ENCODE measurements at regions of chr5 and their contacts with region 1.

Region 1: GRCh38 chr5:151157426-151158286 is at the start of gene ANXA6:
- DNase-seq: peak; percentile 66
- H3K4me3 Mint-ChIP-seq: peak within 1 kb of the TSS; percentile 94
- H3K27ac Mint-ChIP-seq: peak within 1 kb of the TSS; percentile 92
- H3K4me1 Mint-ChIP-seq: peaks cover 58% of the 10 kb centered on the region
- H3K27me3 Mint-ChIP-seq: peaks cover 2% of the 10 kb centered on the region
- total RNA-seq, gene ANXA6: 286 and 301 TPM in 2 replicates

Region 2: DNA sequence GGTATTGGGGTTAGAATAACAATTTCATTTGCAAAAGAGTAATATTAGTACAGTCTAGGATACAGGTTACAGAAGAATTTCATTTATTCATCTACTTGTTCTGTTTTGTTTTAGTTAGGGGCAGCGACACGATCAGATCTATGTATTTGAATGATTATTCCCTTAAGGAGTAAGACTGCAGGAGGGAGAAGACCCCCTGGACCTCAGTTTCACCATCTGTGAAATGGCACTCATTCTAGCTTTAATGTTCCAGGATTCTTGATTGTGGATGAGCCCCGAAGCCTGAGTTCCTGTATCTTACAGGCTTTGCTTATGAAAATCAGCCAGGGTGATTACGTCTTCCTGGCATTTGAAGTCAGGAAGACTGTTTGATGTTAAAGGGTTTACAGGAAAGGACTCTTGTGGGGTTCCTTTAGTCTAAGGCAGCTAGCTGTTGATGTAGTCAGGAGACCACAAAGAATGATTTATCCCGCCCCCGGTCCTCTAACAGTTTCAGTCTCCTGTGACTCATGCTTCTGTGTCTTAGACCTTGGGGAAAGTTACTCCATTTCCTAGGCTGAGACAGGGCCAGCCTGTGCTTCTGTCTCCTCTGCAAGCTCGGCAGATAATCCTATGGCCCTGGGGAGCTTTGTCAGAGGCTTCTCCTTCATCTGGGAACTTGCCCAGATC is 367.6 kb before region 1 on chr5:
- intact Hi-C with region 1: loop called (anchors 2 kb)
- DNase-seq: peak; percentile 63
- H3K4me3 Mint-ChIP-seq: peak overlapping the region; percentile 78
- H3K27ac Mint-ChIP-seq: peak overlapping the region; percentile 87
- H3K4me1 Mint-ChIP-seq: peaks cover 59% of the 10 kb centered on the region
- H3K27me3 Mint-ChIP-seq: no peaks in the 10 kb centered on the region

Region 3: GRCh38 chr5:151115274-151115905 is 42.3 kb before region 1 on chr5:
- intact Hi-C with region 1: no loop called
- DNase-seq: peak; percentile 40
- H3K4me3 Mint-ChIP-seq: no peak overlapping the region
- H3K27ac Mint-ChIP-seq: no peak overlapping the region
- H3K4me1 Mint-ChIP-seq: peaks cover 5% of the 10 kb centered on the region
- H3K27me3 Mint-ChIP-seq: no peaks in the 10 kb centered on the region

Region 4: DNA sequence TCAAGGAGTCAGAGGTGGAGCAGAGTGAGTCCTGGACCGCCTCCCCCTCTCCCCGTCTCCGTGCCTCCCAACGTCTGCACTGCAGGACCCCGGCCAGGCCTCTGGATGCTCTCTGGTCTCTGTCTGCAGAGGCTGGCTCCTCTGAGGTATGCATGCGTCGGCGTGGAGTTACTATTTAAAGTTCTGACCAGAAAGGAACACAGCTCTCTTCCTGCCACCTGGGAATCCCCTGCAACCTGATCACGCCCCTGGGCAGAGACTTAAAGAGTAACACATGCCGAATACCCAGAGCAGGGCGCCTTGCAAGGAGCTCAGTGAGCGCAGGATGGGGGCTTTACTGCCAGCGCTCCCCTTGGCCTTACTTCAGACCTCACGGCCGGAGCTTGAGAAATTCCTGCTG is 16.1 kb before region 1 on chr5:
- intact Hi-C with region 1: loop called (anchors 2 kb)
- DNase-seq: peak; percentile 64
- H3K4me3 Mint-ChIP-seq: peak overlapping the region; percentile 80
- H3K27ac Mint-ChIP-seq: peak overlapping the region; percentile 73
- H3K4me1 Mint-ChIP-seq: peaks cover 88% of the 10 kb centered on the region
- H3K27me3 Mint-ChIP-seq: no peaks in the 10 kb centered on the region

Region 5: DNA sequence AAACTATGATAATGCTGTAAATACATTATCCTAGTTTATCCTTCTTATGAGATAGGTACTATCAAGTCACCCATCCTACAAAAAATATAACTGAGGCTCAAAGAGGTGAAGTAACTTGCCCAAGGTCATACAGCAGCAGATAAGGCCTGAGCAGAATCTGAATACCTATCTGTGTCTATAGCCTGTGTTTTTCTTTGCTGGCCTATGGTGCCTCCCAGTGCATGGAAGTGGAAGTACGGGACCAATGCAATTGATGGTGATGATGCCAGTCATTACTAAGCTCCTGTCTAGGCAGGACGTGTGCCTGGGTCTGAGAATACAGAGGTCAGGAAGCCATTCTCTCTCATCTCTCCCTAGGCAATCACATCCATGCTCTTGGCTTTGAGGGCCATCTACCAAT is 365.7 kb after region 1 on chr5:
- intact Hi-C with region 1: no loop called
- DNase-seq: peak; percentile 15
- H3K4me3 Mint-ChIP-seq: no peak overlapping the region
- H3K27ac Mint-ChIP-seq: no peak overlapping the region
- H3K4me1 Mint-ChIP-seq: no peaks in the 10 kb centered on the region
- H3K27me3 Mint-ChIP-seq: peaks cover 2% of the 10 kb centered on the region

Region 6: GRCh38 chr5:151758430-151759241 is 601.0 kb after region 1 on chr5 and contains the start of gene ATOX1:
- intact Hi-C with region 1: loop called (anchors 1 kb)
- DNase-seq: peak; percentile 90
- H3K4me3 Mint-ChIP-seq: peak within 1 kb of the TSS; percentile 87
- H3K27ac Mint-ChIP-seq: peak within 1 kb of the TSS; percentile 92
- H3K4me1 Mint-ChIP-seq: peaks cover 43% of the 10 kb centered on the region
- H3K27me3 Mint-ChIP-seq: no peaks in the 10 kb centered on the region
- total RNA-seq, gene ATOX1: 72.5 and 83.7 TPM in 2 replicates

Measured in activated T-helper 1 cell treated with anti-CD3 and anti-CD28 coated beads, Interleukin-12 subunit alpha, Interleukin-12 subunit beta, Interleukin-2, Interleukin-4 antibody, amounts not matched to agents 30 ng/mL and 10 ng/mL and 1 ng/mL, durations not matched to agents 14 hours and 24 hours and 36 hours (primary cell).